ENCODE measurements at regions of chr7 and their contacts with region 1.

Region 1: DNA sequence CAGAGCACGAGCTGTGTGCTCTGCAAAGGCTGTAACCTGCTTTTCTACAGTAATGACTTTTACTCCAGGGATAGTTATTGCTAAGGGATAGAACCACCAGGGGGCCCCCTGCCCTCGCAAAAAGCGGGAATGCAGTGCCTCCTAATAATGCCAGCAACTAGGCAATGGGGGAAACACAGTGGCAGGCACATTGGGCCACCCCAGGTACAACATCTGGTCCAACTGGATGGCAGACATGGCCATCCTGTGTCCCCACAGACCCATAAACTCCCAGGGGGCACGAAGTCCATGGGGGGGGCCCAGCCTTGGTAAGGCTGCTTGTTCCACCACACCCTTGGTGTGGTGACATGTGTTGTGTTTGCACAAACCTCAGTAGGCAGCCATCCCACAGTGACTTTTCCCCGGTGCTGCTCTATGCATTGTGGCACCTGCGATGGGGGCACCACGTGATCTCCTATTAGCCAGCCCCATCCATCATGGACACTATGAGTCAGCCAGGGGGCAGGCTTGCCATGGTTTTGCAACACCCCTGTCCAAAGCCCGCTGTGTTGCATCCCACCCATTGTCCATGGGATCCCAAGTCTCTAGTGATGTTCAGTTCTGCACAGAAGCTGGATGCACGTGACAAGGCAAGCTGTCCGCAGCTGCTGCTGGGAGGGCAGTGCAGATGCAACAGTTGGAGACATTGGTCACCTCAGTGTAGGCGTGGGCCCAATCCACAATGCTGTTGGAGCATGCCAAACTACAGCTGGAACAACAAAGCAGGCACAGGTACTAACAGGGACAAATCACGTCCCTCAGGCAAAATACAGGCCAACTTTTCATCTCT is 84.0 kb downstream of the ANLN start:
- DNase-seq: no peak
- CTCF ChIP-seq: peak; percentile 31

Region 2: GRCh38 chr7:36280840-36281812 is 192.5 kb before region 1 on chr7:
- CTCF ChIA-PET with region 1: no interaction called
- POLR2A ChIA-PET with region 1: no interaction called
- DNase-seq: peak; percentile 43
- CTCF ChIP-seq: no peak

Region 3: GRCh38 chr7:36487756-36488336 is 14.2 kb after region 1 on chr7:
- CTCF ChIA-PET with region 1: interaction called, 12 read pairs
- POLR2A ChIA-PET with region 1: no interaction called
- DNase-seq: peak; percentile 37
- CTCF ChIP-seq: peak; percentile 48

Region 4: GRCh38 chr7:36506820-36507219 is 33.2 kb after region 1 on chr7:
- CTCF ChIA-PET with region 1: no interaction called
- POLR2A ChIA-PET with region 1: no interaction called
- DNase-seq: no peak
- CTCF ChIP-seq: no peak

Region 5: DNA sequence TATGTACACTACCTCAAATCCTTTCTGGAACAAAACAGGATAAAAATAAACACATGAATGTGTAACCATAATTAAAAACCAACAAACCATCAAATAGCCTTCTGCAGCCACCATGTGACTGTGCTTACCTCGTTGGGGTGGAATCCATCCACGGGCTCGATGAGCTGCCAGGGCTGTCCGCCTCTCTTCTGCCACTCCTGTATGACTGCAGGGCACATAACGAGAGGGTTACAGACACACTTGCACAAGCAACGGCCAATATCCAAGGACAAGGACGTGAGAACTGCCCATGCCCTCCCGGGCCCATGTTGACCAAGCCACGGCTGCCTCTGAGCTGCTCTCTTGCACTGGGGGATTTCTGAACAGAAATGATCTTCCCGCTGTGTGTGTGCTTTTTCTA is 48.2 kb after region 1 on chr7:
- CTCF ChIA-PET with region 1: no interaction called
- POLR2A ChIA-PET with region 1: no interaction called
- DNase-seq: no peak
- CTCF ChIP-seq: no peak

Region 6: GRCh38 chr7:36535866-36536664 is 62.4 kb after region 1 on chr7:
- CTCF ChIA-PET with region 1: no interaction called
- POLR2A ChIA-PET with region 1: no interaction called
- DNase-seq: no peak
- CTCF ChIP-seq: no peak

Measured in GM10248 (cell line).